ENCODE measurements at regions of chr20 and their contacts with region 1.

Region 1: GRCh38 chr20:14761903-14762302 is 424.5 kb upstream of the FLRT3 start:
- DNase-seq: no peak
- ATAC-seq: peak; percentile 45; the same call in 1 of the 3 replicates
- H3K4me3 ChIP-seq: no peak overlapping the region
- H3K27ac ChIP-seq: no peak overlapping the region
- H3K4me1 ChIP-seq: no peaks in the 10 kb centered on the region
- H3K27me3 ChIP-seq: no peaks in the 10 kb centered on the region
- CTCF ChIP-seq: no peak
- EP300 ChIP-seq: no peak
- POLR2A ChIP-seq: no peak
- RAD21 ChIP-seq: no peak

Region 2: GRCh38 chr20:14732996-14733395 is 28.9 kb before region 1 on chr20:
- CTCF ChIA-PET with region 1: no interaction called
- POLR2A ChIA-PET with region 1: no interaction called
- RAD21 ChIA-PET with region 1: no interaction called
- SMC1A ChIA-PET with region 1: no interaction called
- in situ Hi-C with region 1: no loop called
- intact Hi-C with region 1: no loop called
- DNase-seq: no peak
- ATAC-seq: no peak
- H3K4me3 ChIP-seq: no peak overlapping the region
- H3K27ac ChIP-seq: no peak overlapping the region
- H3K4me1 ChIP-seq: no peaks in the 10 kb centered on the region
- H3K27me3 ChIP-seq: no peaks in the 10 kb centered on the region
- CTCF ChIP-seq: no peak
- EP300 ChIP-seq: no peak
- POLR2A ChIP-seq: no peak
- RAD21 ChIP-seq: no peak

Region 3: DNA sequence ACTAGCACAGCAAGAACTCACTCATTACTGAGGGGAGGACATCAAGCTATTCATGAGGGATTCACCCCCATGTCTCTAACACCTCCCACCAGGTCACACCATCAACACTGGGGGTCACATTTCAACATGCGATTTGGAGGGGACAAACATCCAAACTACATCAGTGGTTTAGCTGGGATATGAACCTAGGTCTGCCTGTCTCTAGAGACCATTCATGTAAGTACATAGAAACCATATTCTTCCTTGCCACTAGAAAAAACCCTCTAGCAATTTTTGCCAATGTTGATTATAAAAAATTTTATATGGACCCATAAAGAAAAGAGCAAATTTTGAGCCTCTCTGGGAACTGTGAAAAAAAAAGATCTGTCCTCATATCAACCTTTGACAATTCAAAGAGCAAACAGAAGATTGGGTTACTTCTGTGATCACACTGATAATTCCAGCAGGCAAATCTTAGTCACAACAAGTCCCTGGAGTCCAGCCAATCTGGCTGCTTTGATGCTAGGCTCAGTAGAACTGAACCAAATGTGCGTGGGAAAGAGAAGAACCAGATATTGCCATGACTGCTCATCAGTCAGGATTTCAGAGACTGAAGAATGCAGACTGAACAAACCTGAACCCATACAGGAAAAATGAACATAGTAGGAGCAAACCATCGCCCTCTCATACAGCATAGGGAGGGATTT is 13.8 kb after region 1 on chr20:
- CTCF ChIA-PET with region 1: interaction called, 4 read pairs
- POLR2A ChIA-PET with region 1: no interaction called
- RAD21 ChIA-PET with region 1: no interaction called
- SMC1A ChIA-PET with region 1: interaction called, 10 read pairs
- in situ Hi-C with region 1: no loop called
- intact Hi-C with region 1: no loop called
- DNase-seq: no peak
- ATAC-seq: no peak
- H3K4me3 ChIP-seq: no peak overlapping the region
- H3K27ac ChIP-seq: no peak overlapping the region
- H3K4me1 ChIP-seq: no peaks in the 10 kb centered on the region
- H3K27me3 ChIP-seq: no peaks in the 10 kb centered on the region
- CTCF ChIP-seq: no peak
- EP300 ChIP-seq: no peak
- POLR2A ChIP-seq: no peak
- RAD21 ChIP-seq: no peak